ENCODE measurements at regions of chrX and their contacts with region 1.

Region 1: GRCh38 chrX:135050603-135051002 is 1.3 kb downstream of the RTL8A start:
- DNase-seq: no peak
- H3K4me3 ChIP-seq: peak overlapping the region; percentile 66 to 68
- H3K27ac ChIP-seq: peak overlapping the region in 1 of 2 donors; percentile 85
- H3K4me1 ChIP-seq: peaks cover 0 to 6% (median 3%) of the 10 kb centered on the region in 4 donors
- H3K27me3 ChIP-seq: no peaks in the 10 kb centered on the region
- CTCF ChIP-seq: no peak

Region 2: GRCh38 chrX:134969726-134970125 is 80.9 kb before region 1 on chrX:
- intact Hi-C with region 1: loop called (anchors 10 kb)
- DNase-seq: no peak
- H3K4me3 ChIP-seq: no peak overlapping the region
- H3K27ac ChIP-seq: no peak overlapping the region
- H3K4me1 ChIP-seq: no peaks in the 10 kb centered on the region
- H3K27me3 ChIP-seq: no peaks in the 10 kb centered on the region
- CTCF ChIP-seq: no peak

Region 3: GRCh38 chrX:136525738-136526606 is 1475.4 kb after region 1 on chrX:
- intact Hi-C with region 1: loop called (anchors 5 kb)
- DNase-seq: peak; percentile 66 to 83
- H3K4me3 ChIP-seq: no peak overlapping the region
- H3K27ac ChIP-seq: peak overlapping the region in 1 of 2 donors; percentile 30
- H3K4me1 ChIP-seq: peaks cover 0 to 12% (median 4%) of the 10 kb centered on the region in 4 donors
- H3K27me3 ChIP-seq: no peaks in the 10 kb centered on the region
- CTCF ChIP-seq: no peak

Measured in tibial artery (tissue), 4 donors.